ENCODE measurements at regions of chr1 and their contacts with region 1.

Region 1: GRCh38 chr1:54480525-54480848 is 67.5 kb upstream of the ACOT11 start:
- DNase-seq: peak; percentile 47
- H3K4me3 Mint-ChIP-seq: peak overlapping the region; percentile 38
- H3K27ac Mint-ChIP-seq: peak overlapping the region; percentile 80
- H3K4me1 Mint-ChIP-seq: peaks cover 73% of the 10 kb centered on the region
- H3K27me3 Mint-ChIP-seq: peaks cover 25% of the 10 kb centered on the region

Region 2: DNA sequence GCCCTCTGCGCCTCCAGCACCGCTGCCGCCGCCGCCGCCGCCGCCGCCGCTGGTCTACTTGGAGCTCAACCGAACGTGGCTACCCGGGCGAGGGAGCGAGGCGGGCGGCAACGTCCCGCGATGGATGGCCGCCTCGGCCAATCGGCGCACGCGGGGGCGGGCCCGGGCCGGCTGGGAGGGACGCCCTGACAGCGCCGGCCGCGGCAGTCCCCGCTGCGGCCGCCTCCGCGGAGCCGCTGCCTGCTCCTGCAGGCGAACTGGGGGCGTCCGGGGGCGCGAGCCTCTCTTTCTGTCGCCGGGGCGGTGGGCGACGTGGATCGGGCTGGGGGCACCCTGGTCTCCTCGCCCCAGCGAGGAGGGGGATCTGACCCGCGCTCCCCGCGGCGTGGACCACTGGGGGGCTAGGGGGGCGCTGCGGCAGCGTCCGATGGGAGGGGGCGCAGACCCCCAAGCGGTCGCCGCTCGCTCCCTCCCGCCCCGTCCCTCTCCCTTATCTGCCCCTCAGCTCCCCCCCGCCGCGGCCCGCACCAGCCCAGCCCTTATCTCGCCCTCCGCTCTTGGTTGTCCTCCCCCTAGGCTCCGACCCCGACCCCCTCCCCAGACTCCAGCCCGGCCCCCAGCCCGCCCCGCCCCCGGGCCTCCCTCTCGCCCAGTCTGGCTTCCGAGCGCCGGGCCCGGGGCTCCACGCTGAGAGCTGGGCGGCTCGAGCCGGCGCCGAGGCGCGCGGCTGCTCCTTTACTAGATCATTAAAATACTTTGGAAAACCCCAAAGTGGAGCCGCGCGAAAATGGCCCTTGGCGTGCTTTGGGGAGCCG is 73.9 kb before region 1 on chr1 and contains the start of gene SSBP3:
- CTCF ChIA-PET with region 1: interaction called, 104 read pairs
- POLR2A ChIA-PET with region 1: interaction called, 60 read pairs
- DNase-seq: peak; percentile 94
- H3K4me3 Mint-ChIP-seq: peak within 1 kb of the TSS; percentile 90
- H3K27ac Mint-ChIP-seq: peak within 1 kb of the TSS; percentile 95
- H3K4me1 Mint-ChIP-seq: peaks cover 66% of the 10 kb centered on the region
- H3K27me3 Mint-ChIP-seq: no peaks in the 10 kb centered on the region
- total RNA-seq, gene SSBP3: 90.0 TPM

Measured in activated CD4-positive, alpha-beta memory T cell treated with anti-CD3 and anti-CD28 coated beads, Interleukin-2, amount 10 ng/mL, durations not matched to agents 7 days and 5 days (primary cell).